Sciatic nerve (tissue), 2 donors: ENCODE measurements at regions of chr5 and their contacts with region 1.

Region 1: GRCh38 chr5:164364237-164365208 is 859.1 kb downstream of the MAT2B start:
- DNase-seq: no peak
- ATAC-seq: no peak

Region 2: DNA sequence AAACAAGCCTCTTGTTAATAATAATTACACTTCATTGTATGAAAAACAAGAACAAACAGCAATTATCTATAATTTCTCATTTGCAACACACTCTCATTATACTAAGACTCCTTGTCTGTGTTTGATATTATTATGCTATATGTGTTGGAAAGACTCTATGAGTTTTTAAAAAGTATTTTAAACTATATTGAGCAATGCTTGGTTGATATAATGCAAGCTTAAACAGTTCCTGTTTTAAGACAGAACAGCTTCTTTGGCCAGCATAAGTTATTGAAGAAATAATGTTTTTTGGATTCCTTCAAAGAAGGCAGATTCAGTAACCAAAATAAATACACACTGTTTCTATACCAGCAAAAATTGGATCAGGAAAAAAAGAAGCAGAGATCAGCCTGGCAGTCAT is 12.3 kb after region 1 on chr5:
- intact Hi-C with region 1: loop called (anchors 1 kb)
- DNase-seq: no peak
- ATAC-seq: no peak

Region 3: DNA sequence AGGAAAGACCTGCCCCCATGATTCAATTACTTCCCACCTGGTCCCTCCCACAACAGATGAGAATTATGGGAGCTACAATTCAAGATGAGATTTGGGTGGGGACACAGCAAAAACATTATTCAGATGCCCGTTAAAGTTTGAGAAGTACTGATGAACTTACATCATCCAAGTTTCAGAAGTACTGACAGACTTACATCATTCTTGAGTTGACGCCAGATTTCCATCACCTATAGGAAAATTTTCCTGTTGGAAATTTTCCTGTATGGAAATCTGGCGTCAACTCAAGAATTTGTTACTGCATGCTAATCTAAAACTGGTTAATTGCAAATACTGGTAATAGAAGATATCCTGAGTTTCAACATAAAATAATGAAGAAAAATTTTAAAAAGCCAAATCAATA is 116.7 kb after region 1 on chr5:
- intact Hi-C with region 1: no loop called
- DNase-seq: no peak
- ATAC-seq: no peak

Region 4: GRCh38 chr5:165143741-165144140 is 779.2 kb after region 1 on chr5:
- intact Hi-C with region 1: no loop called
- DNase-seq: no peak
- ATAC-seq: peak; percentile 38